Activated T-helper 2 cell treated with anti-CD3 and anti-CD28 coated beads, Interferon-gamma antibody, Interleukin-2, Interleukin-4, amounts not matched to agents 10 μg/mL and 5 μg/mL and 100 μg/mL, durations not matched to agents 14 hours and 24 hours and 36 hours (primary cell): ENCODE measurements at regions of chr14 and their contacts with region 1.

Region 1: GRCh38 chr14:69766984-69767368 is at the start of gene SRSF5:
- DNase-seq: peak; percentile 93
- H3K4me3 Mint-ChIP-seq: peak within 1 kb of the TSS; percentile 96
- H3K27ac Mint-ChIP-seq: peak within 1 kb of the TSS; percentile 100
- H3K4me1 Mint-ChIP-seq: peaks cover 59% of the 10 kb centered on the region
- H3K27me3 Mint-ChIP-seq: no peaks in the 10 kb centered on the region
- total RNA-seq, gene SRSF5: 316 and 358 TPM in 2 replicates

Region 2: DNA sequence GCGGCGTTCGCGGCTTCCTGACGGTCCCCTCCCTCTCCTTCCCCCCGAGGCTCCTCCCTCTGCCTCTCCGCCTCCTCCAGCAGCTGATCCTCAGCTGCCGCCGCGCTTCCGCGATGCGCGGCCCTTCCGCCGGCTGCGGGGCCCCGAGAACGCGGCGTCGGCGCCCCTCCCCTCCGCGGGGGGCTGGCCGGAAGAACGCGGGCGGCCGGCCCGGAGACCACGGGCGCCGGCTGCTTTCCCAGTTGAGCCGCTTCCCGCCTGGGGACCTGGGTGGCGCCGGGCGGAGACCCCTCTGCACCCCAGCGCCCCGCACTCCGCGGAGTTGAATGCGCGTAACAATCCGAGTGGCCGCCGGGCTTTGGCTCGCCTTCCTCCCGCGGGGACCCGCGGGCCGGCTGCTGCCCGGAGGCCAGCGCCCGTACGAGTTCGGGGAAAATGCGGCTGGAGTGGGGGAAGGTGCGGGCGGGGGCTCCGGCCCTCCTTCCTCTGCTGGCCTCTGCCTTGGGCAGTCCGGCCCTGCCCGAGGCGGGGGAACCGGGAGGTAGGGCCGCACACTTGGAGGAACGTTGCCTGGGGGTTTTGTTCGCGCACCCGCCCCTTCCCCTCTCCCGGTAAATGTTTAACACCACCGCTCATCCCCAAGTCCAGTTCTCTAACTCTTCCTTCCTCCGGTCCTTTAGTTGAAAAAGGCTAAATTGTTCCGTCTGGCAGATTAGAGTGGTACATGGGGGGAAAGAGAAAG is 613.7 kb before region 1 on chr14:
- intact Hi-C with region 1: loop called (anchors 5 kb)
- DNase-seq: peak; percentile 93
- H3K4me3 Mint-ChIP-seq: peak overlapping the region; percentile 91
- H3K27ac Mint-ChIP-seq: peak overlapping the region; percentile 92
- H3K4me1 Mint-ChIP-seq: peaks cover 28% of the 10 kb centered on the region
- H3K27me3 Mint-ChIP-seq: peaks cover 35% of the 10 kb centered on the region

Region 3: GRCh38 chr14:69611201-69612011 is 155.6 kb before region 1 on chr14 and contains the start of gene SUSD6:
- intact Hi-C with region 1: loop called (anchors 1 kb)
- DNase-seq: peak; percentile 80
- H3K4me3 Mint-ChIP-seq: peak within 1 kb of the TSS; percentile 94
- H3K27ac Mint-ChIP-seq: peak within 1 kb of the TSS; percentile 97
- H3K4me1 Mint-ChIP-seq: peaks cover 52% of the 10 kb centered on the region
- H3K27me3 Mint-ChIP-seq: no peaks in the 10 kb centered on the region
- total RNA-seq, gene SUSD6: 46.6 and 46.7 TPM in 2 replicates

Region 4: GRCh38 chr14:69695322-69696203 is 71.4 kb before region 1 on chr14:
- intact Hi-C with region 1: loop called (anchors 5 kb)
- DNase-seq: no peak
- H3K4me3 Mint-ChIP-seq: no peak overlapping the region
- H3K27ac Mint-ChIP-seq: peak overlapping the region; percentile 47
- H3K4me1 Mint-ChIP-seq: peaks cover 69% of the 10 kb centered on the region
- H3K27me3 Mint-ChIP-seq: no peaks in the 10 kb centered on the region

Region 5: GRCh38 chr14:69887740-69888657 is 121.0 kb after region 1 on chr14:
- intact Hi-C with region 1: no loop called
- DNase-seq: no peak
- H3K4me3 Mint-ChIP-seq: no peak overlapping the region
- H3K27ac Mint-ChIP-seq: no peak overlapping the region
- H3K4me1 Mint-ChIP-seq: no peaks in the 10 kb centered on the region
- H3K27me3 Mint-ChIP-seq: peaks cover 21% of the 10 kb centered on the region

Region 6: GRCh38 chr14:70907176-70907995 is 1140.4 kb after region 1 on chr14 and contains the start of gene PCNX1:
- intact Hi-C with region 1: loop called (anchors 5 kb)
- DNase-seq: peak; percentile 87
- H3K4me3 Mint-ChIP-seq: peak within 1 kb of the TSS; percentile 84
- H3K27ac Mint-ChIP-seq: peak within 1 kb of the TSS; percentile 90
- H3K4me1 Mint-ChIP-seq: peaks cover 57% of the 10 kb centered on the region
- H3K27me3 Mint-ChIP-seq: no peaks in the 10 kb centered on the region
- total RNA-seq, gene PCNX1: 54.5 and 59.0 TPM in 2 replicates